ENCODE measurements at regions of chr22 and their contacts with region 1.

Region 1: GRCh38 chr22:42614312-42615091 is at the start of gene POLDIP3:
- DNase-seq: peak; percentile 97
- ATAC-seq: peak; percentile 60
- H3K4me3 Mint-ChIP-seq: peak within 1 kb of the TSS; percentile 97
- H3K27ac Mint-ChIP-seq: peak within 1 kb of the TSS; percentile 100
- H3K4me1 Mint-ChIP-seq: peaks cover 56% of the 10 kb centered on the region
- H3K27me3 Mint-ChIP-seq: no peaks in the 10 kb centered on the region
- CTCF ChIP-seq: no peak
- total RNA-seq, gene POLDIP3: 77.1 and 77.5 TPM in 2 replicates

Region 2: GRCh38 chr22:42544686-42545085 is 69.8 kb before region 1 on chr22:
- CTCF ChIA-PET with region 1: no interaction called
- POLR2A ChIA-PET with region 1: interaction called, 11 read pairs
- intact Hi-C with region 1: no loop called
- DNase-seq: no peak
- ATAC-seq: no peak
- H3K4me3 Mint-ChIP-seq: no peak overlapping the region
- H3K27ac Mint-ChIP-seq: no peak overlapping the region
- H3K4me1 Mint-ChIP-seq: peaks cover 18% of the 10 kb centered on the region
- H3K27me3 Mint-ChIP-seq: no peaks in the 10 kb centered on the region
- CTCF ChIP-seq: no peak

Region 3: DNA sequence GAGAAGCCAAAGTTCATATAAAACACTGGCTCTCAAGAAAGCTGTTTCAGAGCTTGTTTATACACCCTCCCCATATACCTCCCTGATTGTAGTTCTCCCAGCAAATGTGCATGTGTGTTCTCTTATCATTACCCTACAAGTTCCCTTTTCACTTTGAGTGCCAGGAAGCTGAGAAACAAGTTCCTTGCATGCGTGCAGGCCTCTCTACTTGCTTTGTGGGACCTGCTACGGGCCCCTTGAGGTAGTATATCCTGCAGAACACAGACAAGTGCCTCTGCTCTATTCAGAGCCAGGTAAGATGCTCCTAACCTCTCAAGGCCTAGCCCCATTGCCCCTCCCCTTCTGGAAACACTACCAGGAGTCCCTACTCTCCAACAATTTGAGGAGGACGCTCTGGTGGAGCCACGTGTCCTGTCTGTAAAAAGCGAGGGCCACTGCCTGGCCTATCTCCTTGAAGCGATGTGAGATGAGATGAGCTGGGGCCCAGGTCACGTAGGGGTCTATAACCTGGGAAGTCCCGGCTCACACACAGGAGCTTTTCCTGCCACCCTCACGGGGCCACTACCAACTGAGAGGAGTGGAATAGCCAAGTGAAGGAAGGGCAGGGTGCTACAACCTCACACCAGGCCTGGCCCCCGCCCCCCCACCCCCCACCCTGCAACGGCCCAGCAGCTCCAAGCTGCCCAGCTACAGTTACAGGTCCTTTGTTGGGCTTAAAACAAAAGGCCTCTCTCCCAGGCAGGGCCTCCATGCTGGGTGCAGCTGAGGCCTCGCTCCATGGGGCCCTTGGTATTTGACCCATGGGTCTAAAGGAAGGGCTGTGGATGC is 28.5 kb after region 1 on chr22:
- CTCF ChIA-PET with region 1: interaction called, 3 read pairs
- POLR2A ChIA-PET with region 1: interaction called, 68 read pairs
- intact Hi-C with region 1: no loop called
- DNase-seq: no peak
- ATAC-seq: peak; percentile 84
- H3K4me3 Mint-ChIP-seq: no peak overlapping the region
- H3K27ac Mint-ChIP-seq: peak overlapping the region; percentile 74
- H3K4me1 Mint-ChIP-seq: peaks cover 67% of the 10 kb centered on the region
- H3K27me3 Mint-ChIP-seq: no peaks in the 10 kb centered on the region
- CTCF ChIP-seq: no peak

Region 4: GRCh38 chr22:42662114-42663021 is 47.9 kb after region 1 on chr22:
- CTCF ChIA-PET with region 1: no interaction called
- POLR2A ChIA-PET with region 1: interaction called, 96 read pairs
- intact Hi-C with region 1: loop called (anchors 2 kb)
- DNase-seq: peak; percentile 83
- ATAC-seq: peak; percentile 33
- H3K4me3 Mint-ChIP-seq: peak overlapping the region; percentile 77
- H3K27ac Mint-ChIP-seq: peak overlapping the region; percentile 53
- H3K4me1 Mint-ChIP-seq: peaks cover 46% of the 10 kb centered on the region
- H3K27me3 Mint-ChIP-seq: no peaks in the 10 kb centered on the region
- CTCF ChIP-seq: peak; percentile 75

Region 5: GRCh38 chr22:42769574-42770447 is 155.3 kb after region 1 on chr22:
- CTCF ChIA-PET with region 1: no interaction called
- POLR2A ChIA-PET with region 1: interaction called, 14 read pairs
- intact Hi-C with region 1: no loop called
- DNase-seq: peak; percentile 62
- ATAC-seq: peak; percentile 91
- H3K4me3 Mint-ChIP-seq: peak overlapping the region; percentile 77
- H3K27ac Mint-ChIP-seq: peak overlapping the region; percentile 70
- H3K4me1 Mint-ChIP-seq: peaks cover 63% of the 10 kb centered on the region
- H3K27me3 Mint-ChIP-seq: no peaks in the 10 kb centered on the region
- CTCF ChIP-seq: no peak

Region 6: GRCh38 chr22:42863349-42863961 is 249.0 kb after region 1 on chr22:
- CTCF ChIA-PET with region 1: no interaction called
- POLR2A ChIA-PET with region 1: interaction called, 40 read pairs
- intact Hi-C with region 1: no loop called
- DNase-seq: no peak
- ATAC-seq: peak; percentile 60
- H3K4me3 Mint-ChIP-seq: peak overlapping the region; percentile 64
- H3K27ac Mint-ChIP-seq: peak overlapping the region; percentile 96
- H3K4me1 Mint-ChIP-seq: peaks cover 45% of the 10 kb centered on the region
- H3K27me3 Mint-ChIP-seq: no peaks in the 10 kb centered on the region
- CTCF ChIP-seq: no peak

Region 7: DNA sequence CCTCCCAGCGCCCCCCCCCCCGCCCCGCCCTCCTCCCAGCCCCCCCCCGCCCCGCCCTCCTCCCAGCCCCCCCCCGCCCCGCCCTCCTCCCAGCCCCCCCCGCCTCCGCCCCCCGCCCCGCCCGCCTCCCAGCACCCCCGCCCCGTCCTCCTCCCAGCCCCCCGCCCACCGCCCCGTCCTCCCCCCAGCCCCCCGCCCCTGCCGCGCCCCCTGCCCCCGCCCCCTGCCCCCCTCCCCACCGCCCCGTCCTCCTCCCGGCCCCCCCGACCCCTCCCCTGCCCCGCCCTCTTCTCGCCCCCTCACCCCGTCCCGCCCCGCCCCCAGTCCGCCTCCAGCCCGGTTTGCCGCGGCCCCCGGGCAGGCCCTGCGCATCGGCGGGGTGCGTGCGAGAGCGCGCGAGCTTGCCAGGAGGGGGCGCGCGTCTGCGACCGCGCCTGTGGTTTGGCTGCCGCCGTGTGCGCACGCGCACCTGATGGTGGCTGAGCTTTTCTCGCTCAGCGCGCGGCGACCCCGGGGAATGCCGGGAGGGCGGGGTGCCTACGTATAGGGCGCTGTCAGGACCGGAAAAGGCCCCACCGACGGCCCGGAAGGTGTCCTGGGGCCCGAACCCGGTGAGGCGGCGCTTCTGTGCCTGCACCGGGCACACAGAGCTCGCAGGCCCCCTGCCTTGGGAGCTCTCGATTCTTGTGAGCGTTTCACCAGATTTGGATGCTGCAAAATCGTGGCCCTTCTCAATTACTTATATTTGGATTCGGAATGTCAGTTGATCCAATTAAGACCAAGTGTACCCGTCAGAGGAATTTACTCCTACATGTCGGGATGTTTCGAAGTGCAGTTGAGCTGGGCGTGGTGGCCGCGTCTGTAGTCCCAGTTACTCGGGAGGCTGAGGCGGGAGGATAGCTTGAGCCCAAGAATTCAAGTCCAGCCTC is 572.9 kb after region 1 on chr22:
- CTCF ChIA-PET with region 1: no interaction called
- POLR2A ChIA-PET with region 1: interaction called, 14 read pairs
- intact Hi-C with region 1: no loop called
- DNase-seq: peak; percentile 97
- ATAC-seq: peak; percentile 88
- H3K4me3 Mint-ChIP-seq: peak overlapping the region; percentile 81
- H3K27ac Mint-ChIP-seq: peak overlapping the region; percentile 92
- H3K4me1 Mint-ChIP-seq: peaks cover 14% of the 10 kb centered on the region
- H3K27me3 Mint-ChIP-seq: peaks cover 3% of the 10 kb centered on the region
- CTCF ChIP-seq: no peak